Left lung (tissue), 14 donors: ENCODE measurements at regions of chr15 and their contacts with region 1.

Region 1: GRCh38 chr15:29103824-29104565 is 165.6 kb downstream of the NSMCE3 start:
- DNase-seq: peak; percentile 58 to 87 (median 81)
- ATAC-seq: peak; percentile 91
- H3K4me3 ChIP-seq: peak overlapping the region in 1 of 2 donors; percentile 2
- H3K27ac ChIP-seq: no peak overlapping the region
- H3K4me1 ChIP-seq: peaks cover 0 to 8% of the 10 kb centered on the region in 2 donors
- H3K27me3 ChIP-seq: peaks cover 0 to 25% of the 10 kb centered on the region in 2 donors
- CTCF ChIP-seq: peak; percentile 73 to 84

Region 2: DNA sequence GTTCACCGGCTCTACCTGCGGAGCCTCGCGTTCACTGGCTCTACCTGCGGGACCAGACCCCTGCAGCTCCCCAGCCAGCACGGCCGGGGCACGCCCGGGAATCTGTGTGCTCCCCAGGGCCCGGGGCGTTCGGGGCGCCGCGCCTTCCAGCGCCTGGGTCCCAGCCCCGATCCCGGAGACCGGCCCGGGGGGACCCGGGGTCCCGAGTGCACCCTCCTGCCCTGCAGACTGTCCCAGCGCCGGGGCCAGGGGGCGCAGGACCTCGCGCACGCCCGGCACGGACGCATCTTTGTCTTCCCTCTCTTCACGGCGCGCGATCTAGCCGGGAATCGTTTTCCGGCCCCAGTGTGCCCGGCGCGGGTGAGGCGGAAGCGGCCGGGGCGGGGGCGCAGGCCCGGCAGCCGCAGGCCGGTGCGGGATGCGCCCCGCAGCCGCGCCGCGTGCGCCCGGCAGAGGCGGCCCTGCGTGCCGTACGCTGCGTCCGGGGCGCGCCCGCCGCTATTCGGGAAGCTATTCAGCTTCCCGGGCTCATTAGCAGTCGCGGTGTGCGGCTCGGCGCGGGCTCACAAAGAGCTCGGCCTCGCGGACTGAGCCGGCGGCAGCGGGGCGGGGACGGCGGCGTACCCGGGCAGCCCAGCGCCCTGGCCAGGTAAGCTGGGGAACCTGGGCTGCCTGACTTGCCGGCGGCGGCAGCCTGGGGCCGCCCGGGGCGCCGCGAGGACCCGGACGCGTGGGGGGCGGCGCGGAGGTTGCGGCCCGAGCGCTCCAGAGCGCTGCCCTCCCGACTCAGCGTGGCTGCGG is 218.2 kb before region 1 on chr15 and contains the start of gene APBA2:
- intact Hi-C with region 1: loop called in 1 of 2 experiments (anchors 10 kb)
- DNase-seq: peak in 2 of 4 donors; percentile 44 to 52
- ATAC-seq: peak; percentile 53
- H3K4me3 ChIP-seq: peak within 1 kb of the TSS; percentile 33 to 35
- H3K27ac ChIP-seq: no peak within 1 kb of the TSS
- H3K4me1 ChIP-seq: peaks cover 0 to 16% of the 10 kb centered on the region in 2 donors
- H3K27me3 ChIP-seq: peaks cover 19 to 58% of the 10 kb centered on the region in 2 donors
- CTCF ChIP-seq: no peak
- polyA plus RNA-seq, gene APBA2: 10.5 to 18.4 (median 11.5) TPM